ENCODE measurements at regions of chr16 and their contacts with region 1.

Region 1: GRCh38 chr16:82626791-82627261 is at the start of gene CDH13:
- DNase-seq: no peak
- H3K4me3 ChIP-seq: peak within 1 kb of the TSS; percentile 76
- CTCF ChIP-seq: no peak

Region 2: GRCh38 chr16:82594114-82594513 is 32.7 kb before region 1 on chr16:
- CTCF ChIA-PET with region 1: no interaction called
- POLR2A ChIA-PET with region 1: no interaction called
- DNase-seq: no peak
- H3K4me3 ChIP-seq: no peak overlapping the region
- CTCF ChIP-seq: no peak

Region 3: DNA sequence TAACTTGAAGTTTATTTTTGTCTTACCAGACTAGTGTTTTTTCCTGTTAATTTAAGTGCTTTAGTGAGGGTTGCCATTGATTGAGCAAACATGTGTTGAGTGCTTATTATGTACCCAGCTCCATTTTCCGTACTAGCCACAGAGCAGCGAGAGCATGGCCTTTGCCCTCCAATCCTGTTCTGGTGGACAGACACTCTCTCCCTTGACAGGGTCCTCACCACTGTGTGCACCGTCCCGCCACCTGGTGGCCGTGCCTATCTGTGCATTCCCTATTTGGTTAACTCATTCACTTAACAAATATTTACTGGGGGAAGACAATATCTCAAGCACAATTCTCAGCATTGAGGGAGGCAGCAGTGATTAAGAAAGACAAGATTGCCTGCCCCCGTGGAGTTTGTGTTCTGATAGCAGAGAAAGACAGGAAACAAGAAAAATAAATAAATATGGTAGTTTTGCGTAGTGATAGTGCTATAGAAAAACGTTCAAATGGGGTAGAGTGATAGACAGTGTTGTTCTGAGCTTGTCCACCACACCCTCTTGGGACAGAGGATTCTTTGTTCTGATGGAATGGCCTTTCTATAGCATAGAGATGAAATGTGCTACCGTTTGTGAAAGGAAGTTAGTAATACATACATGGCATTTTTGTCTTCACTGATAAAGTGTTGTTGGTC is 13.0 kb after region 1 on chr16:
- CTCF ChIA-PET with region 1: interaction called, 66 read pairs
- POLR2A ChIA-PET with region 1: interaction called, 4 read pairs
- DNase-seq: no peak
- H3K4me3 ChIP-seq: no peak overlapping the region
- CTCF ChIP-seq: peak; percentile 76

Region 4: GRCh38 chr16:82653550-82654511 is 27.0 kb after region 1 on chr16:
- CTCF ChIA-PET with region 1: interaction called, 12 read pairs
- POLR2A ChIA-PET with region 1: interaction called, 3 read pairs
- DNase-seq: peak; percentile 80
- H3K4me3 ChIP-seq: peak overlapping the region; percentile 38
- CTCF ChIP-seq: no peak

Region 5: DNA sequence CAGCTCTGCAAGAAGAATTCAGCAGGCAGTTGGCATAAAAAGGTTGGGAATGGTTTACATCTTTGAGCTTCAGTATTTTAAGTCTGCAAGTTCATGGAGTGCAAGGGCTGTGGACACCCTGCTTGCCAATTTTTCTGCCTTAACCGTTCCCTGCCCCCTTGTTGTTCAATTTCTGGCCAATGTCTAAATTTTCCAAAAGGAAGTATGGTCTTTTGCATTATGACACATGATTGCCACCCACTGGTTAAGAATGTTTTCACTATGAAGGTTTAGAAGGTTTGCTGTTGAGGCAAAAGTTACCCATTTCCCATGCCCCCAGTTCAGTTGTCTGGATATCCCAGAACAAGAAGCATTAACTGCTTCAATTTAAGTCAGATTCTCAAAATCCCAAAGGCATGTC is 441.9 kb after region 1 on chr16:
- CTCF ChIA-PET with region 1: interaction called, 11 read pairs
- POLR2A ChIA-PET with region 1: no interaction called
- DNase-seq: no peak
- H3K4me3 ChIP-seq: no peak overlapping the region
- CTCF ChIP-seq: peak; percentile 14

Region 6: GRCh38 chr16:83215406-83216001 is 588.7 kb after region 1 on chr16:
- CTCF ChIA-PET with region 1: interaction called, 10 read pairs
- POLR2A ChIA-PET with region 1: no interaction called
- DNase-seq: no peak
- H3K4me3 ChIP-seq: no peak overlapping the region
- CTCF ChIP-seq: peak; percentile 79

Region 7: DNA sequence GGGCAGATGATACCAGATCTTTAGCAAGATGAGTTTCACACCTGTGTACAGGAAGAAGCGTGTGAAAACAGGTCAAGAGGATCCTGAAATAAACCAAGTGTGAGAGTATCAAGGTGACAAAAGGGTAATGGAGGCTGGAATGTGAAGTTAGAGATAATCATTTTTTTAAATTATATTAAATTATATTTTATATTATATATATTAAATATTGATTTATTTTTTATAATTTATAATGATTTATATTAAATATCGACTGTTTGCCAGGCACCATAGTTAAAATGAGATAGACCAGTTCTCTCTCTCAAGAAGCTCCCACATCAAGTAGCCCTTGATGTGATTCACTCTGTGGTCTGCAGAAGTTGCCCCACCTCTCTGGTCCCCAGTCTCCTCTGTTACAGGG is 820.7 kb after region 1 on chr16:
- CTCF ChIA-PET with region 1: interaction called, 23 read pairs
- POLR2A ChIA-PET with region 1: no interaction called
- DNase-seq: no peak
- H3K4me3 ChIP-seq: no peak overlapping the region
- CTCF ChIP-seq: no peak